ENCODE measurements at regions of chr1 and their contacts with region 1.

Region 1: DNA sequence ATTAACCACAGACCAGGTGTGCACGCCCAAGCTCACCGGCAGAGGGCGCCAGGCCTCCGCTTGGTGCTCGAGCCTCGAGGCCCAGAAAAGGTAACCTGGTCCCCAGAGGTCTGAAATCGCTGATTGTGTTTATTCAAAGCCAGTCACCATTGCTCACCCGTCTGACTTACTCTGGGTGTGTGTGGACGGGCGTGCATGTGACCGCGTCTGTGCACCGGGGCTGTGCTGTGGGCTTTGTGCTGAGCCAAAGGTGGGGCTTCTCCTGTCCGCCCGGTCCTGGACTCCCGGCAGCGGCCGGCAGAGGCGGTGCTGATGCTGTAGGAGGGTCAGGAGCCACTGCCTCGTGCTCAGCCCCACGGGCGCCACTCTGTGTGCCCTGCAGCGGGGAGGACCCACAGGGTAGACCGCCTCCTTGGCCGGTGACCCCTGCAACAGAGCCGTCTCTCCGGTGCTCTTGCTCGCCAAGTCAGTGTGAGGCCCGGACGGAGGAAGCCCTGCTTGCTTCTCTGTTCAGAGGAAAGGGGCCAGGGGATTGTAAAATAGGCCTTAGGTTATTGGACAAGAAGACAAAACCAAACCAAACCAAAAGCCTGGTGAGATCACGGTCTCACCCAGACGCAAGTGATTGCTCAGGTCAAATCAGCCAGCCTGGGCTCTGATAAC is 32.0 kb upstream of the BTG2 start:
- DNase-seq: peak; percentile 96
- H3K4me3 Mint-ChIP-seq: peak overlapping the region; percentile 28
- H3K27ac Mint-ChIP-seq: no peak overlapping the region
- H3K4me1 Mint-ChIP-seq: peaks cover 3% of the 10 kb centered on the region
- H3K27me3 Mint-ChIP-seq: no peaks in the 10 kb centered on the region
- CTCF ChIP-seq: peak; percentile 100

Region 2: GRCh38 chr1:202982715-202983430 is 290.5 kb before region 1 on chr1:
- CTCF ChIA-PET with region 1: no interaction called
- POLR2A ChIA-PET with region 1: no interaction called
- intact Hi-C with region 1: no loop called
- DNase-seq: peak; percentile 64
- H3K4me3 Mint-ChIP-seq: no peak overlapping the region
- H3K27ac Mint-ChIP-seq: no peak overlapping the region
- H3K4me1 Mint-ChIP-seq: no peaks in the 10 kb centered on the region
- H3K27me3 Mint-ChIP-seq: peaks cover 30% of the 10 kb centered on the region
- CTCF ChIP-seq: no peak

Region 3: GRCh38 chr1:203031467-203031866 is 241.9 kb before region 1 on chr1:
- CTCF ChIA-PET with region 1: interaction called, 408 read pairs
- POLR2A ChIA-PET with region 1: no interaction called
- intact Hi-C with region 1: no loop called
- DNase-seq: no peak
- H3K4me3 Mint-ChIP-seq: no peak overlapping the region
- H3K27ac Mint-ChIP-seq: no peak overlapping the region
- H3K4me1 Mint-ChIP-seq: no peaks in the 10 kb centered on the region
- H3K27me3 Mint-ChIP-seq: peaks cover 11% of the 10 kb centered on the region
- CTCF ChIP-seq: peak; percentile 20

Region 4: DNA sequence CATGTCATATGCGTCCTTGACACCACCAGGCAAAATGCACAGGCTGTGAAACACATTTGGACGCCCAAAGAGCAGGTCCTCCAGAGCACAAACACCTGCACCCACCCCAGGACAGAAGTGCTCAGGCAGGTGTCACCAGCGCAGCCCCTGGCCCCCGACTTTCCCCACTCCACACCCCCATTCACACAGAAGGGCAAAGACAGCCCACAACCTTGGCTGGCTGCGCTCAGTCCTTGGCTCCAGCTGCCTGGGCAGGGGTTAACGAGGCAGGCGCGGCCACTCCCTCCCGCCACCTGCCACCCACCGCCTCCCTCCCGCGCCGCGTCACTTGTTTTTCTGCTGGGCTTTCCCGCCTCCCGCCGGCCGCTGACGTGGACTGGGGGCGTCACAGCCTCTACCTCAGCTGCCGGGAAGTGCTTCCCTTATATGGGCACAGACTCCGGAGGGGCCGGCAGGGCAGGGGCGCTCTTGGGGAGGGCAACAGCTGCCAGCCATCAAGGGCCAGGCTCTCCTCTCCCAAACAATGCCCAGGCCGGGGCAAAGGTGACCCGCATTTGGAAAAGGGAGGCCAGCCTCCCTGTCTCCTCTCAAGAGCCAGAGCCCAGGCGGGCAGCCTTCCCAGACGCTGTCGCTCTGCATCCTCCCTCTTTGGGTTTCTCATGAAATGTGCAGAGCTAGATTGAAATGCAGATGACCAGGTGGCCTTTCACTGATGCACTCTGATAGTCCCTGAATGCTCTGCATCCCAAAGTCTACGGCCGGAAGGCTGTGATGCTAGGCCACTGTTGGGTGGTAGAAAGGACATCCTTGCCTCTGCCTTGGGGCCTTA is 17.1 kb after region 1 on chr1:
- CTCF ChIA-PET with region 1: interaction called, 199 read pairs
- POLR2A ChIA-PET with region 1: interaction called, 3 read pairs
- intact Hi-C with region 1: no loop called
- DNase-seq: peak; percentile 47
- H3K4me3 Mint-ChIP-seq: no peak overlapping the region
- H3K27ac Mint-ChIP-seq: no peak overlapping the region
- H3K4me1 Mint-ChIP-seq: no peaks in the 10 kb centered on the region
- H3K27me3 Mint-ChIP-seq: no peaks in the 10 kb centered on the region
- CTCF ChIP-seq: no peak

Region 5: DNA sequence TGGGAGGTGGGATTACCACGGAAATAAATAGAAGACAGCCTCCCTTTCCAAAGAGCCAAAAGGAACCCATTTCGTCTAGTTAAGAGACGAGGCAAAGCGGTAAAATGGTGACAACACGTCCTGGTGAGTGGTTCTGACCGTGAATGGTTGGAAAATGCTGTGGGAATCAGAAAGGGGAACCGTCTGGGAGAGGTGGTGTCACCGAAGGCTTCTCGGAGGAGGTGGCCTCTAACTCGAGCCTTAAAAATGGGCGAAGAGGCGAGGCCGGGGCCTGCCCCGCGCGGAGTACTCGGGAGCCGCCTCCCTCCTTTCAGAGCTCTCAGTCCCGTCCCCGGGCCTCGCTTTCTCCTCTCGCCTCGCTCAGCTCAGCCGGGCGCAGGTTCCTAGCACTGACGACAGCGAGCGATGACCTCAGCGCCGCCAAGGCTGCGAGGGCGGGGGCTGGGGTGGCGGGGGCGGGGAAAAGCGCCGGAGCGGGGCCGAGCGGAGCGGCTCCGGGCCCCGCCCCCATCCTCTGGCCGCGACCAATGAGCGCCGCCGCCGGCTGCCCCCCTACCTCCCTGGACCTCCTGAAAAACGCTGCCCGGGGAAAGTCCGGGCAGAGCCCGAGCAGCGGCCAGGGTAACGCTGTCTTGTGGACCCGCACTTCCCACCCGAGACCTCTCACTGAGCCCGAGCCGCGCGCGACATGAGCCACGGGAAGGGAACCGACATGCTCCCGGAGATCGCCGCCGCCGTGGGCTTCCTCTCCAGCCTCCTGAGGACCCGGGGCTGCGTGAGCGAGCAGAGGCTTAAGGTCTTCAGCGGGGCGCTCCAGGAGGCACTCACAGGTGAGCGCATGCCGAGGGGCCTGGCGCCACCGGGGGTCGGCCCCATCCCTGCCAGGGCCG is 31.8 kb after region 1 on chr1 and contains the start of gene BTG2:
- CTCF ChIA-PET with region 1: interaction called, 195 read pairs
- POLR2A ChIA-PET with region 1: interaction called, 86 read pairs
- intact Hi-C with region 1: loop called (anchors 1 kb)
- DNase-seq: peak; percentile 96
- H3K4me3 Mint-ChIP-seq: peak within 1 kb of the TSS; percentile 71
- H3K27ac Mint-ChIP-seq: peak within 1 kb of the TSS; percentile 6
- H3K4me1 Mint-ChIP-seq: peaks cover 48% of the 10 kb centered on the region
- H3K27me3 Mint-ChIP-seq: no peaks in the 10 kb centered on the region
- CTCF ChIP-seq: no peak
- total RNA-seq, gene BTG2: 39.8 and 44.4 TPM in 2 replicates

Region 6: DNA sequence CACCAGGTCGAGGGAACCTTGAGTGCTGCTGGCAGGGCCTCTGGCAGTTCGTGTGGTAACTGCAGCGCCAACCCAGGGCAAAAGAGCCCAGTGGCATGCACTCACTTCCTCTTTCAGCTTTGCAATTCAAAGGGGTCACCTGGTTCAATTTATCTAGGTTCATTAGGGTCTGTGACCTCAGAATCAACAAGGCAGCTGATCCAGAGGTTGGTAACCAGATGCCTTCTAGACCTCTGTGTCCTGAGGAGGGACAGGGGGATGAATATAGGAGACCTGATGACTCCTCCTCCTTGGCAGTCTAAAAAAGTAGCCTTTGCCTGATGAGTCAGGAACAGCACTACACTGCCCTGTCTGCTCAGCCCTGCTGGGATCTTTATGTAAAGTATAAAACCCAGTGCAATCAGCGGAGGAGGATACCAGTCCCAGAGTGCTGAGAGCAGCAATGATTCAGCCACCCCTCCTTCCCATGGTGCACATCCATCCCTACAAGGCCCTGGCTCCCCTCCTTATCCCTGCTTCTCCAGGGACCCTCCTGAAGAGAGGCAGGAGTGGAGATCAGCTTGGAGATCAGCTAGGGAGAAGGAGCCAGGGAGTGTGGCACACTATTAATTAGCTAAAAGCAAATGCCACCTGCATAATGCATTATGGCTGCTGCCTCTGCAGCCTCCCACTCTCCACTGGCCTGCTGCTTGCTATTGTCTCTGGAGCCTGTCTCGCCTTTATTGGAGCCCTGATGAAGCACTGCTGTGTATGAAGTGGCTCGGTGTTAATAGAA is 88.8 kb after region 1 on chr1:
- CTCF ChIA-PET with region 1: interaction called, 85 read pairs
- POLR2A ChIA-PET with region 1: no interaction called
- intact Hi-C with region 1: no loop called
- DNase-seq: peak; percentile 53
- H3K4me3 Mint-ChIP-seq: no peak overlapping the region
- H3K27ac Mint-ChIP-seq: no peak overlapping the region
- H3K4me1 Mint-ChIP-seq: no peaks in the 10 kb centered on the region
- H3K27me3 Mint-ChIP-seq: peaks cover 76% of the 10 kb centered on the region
- CTCF ChIP-seq: no peak

Region 7: DNA sequence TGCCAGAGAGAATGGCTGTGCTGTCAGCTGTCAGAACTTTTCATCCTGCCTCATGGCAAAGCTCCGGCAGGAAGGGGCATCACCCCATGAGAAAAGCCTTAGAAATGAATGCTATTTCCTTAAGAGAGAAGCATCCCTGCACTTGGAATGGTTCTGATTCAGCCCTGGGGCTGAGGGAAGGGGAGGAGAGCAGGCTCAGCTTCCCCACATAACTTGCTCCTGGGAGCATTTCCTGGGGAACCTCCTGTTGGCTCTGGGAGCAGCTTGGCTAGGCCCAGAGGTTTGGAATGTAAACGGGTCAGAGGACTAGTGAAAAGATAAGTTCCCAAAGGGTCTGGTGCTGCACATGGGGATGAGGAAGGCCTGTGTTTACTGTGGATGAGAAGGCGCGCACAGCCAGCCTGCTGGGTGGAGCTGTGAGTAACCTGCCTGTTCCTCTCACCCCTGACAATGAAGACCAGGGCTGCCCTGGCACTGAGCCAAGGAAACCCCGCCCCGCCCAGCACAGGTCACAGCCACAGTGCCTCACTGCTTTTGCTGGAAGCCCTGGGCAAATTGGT is 207.3 kb after region 1 on chr1:
- CTCF ChIA-PET with region 1: interaction called, 175 read pairs
- POLR2A ChIA-PET with region 1: no interaction called
- intact Hi-C with region 1: no loop called
- DNase-seq: peak; percentile 92
- H3K4me3 Mint-ChIP-seq: no peak overlapping the region
- H3K27ac Mint-ChIP-seq: no peak overlapping the region
- H3K4me1 Mint-ChIP-seq: peaks cover 20% of the 10 kb centered on the region
- H3K27me3 Mint-ChIP-seq: peaks cover 21% of the 10 kb centered on the region
- CTCF ChIP-seq: no peak

Measured in MCF 10A (cell line).